G401 (cell line): ENCODE measurements at regions of chr12 and their contacts with region 1.

Region 1: DNA sequence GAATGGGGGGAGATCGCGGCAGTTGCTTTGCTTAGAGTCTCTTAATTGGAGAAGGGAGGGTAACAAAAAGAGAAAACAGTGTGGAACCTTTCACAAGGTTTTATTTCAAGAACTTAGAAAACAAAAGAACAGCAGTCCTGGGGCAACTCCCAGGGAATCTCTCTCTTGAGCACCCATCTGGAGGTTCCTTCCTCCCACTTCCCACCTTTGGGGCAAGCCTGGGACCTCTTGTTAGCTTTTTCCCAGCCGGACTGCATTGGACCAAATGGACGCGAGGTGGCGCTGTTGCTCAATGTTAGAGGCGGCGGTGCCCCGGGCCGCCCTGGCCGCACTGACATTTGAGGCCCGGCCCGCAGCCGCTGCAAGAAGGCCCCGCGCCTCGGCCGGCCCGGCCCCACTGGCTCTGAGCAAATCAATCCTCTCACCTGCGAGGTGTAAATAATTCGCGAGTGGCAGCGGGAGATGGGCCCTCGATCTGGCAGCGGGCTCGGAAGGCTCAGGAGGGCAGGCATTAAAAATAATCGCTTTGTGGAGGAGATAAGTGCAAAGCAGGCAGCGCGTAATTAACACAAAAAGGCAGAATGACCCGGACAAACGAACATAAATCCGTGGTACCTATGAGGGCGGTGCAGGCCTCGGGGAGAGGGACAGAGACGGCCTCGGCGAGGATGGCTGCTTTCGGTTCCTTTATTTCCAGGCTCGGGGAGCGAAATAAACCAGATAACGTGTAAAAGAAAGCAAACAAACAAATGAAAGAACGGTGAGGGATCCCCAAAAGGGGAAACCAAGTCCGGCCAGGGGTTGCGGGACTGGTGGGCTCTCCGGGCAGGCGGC is 2.7 kb upstream of the HOXC8 start:
- DNase-seq: peak; percentile 88

Region 2: DNA sequence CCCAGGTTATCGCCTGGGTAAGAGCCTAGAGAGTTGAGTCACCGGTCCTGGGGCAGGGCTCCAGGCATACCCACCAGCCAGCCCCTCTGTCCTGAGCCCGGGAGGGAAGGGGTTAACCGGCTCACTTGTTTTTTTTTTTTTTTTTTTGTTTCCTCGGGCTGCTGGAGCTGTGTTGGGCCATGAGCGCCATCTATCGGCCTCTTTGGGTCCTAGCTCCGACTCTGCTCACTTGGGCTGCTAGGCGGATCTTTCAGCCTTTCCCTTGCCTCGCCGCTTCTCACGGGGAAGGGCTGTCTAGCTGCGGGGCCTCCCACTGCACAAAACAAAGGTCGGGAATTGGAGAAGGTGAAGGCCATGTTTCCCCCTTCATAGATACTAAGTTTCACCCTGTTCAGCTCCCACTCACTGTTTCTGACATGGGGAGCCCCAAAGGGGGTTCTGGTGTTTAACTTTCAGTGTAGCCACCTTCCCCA is 185.5 kb after region 1 on chr12:
- in situ Hi-C with region 1: loop called (anchors 25 kb)
- DNase-seq: peak; percentile 88